Psoas muscle (tissue), 8 donors: ENCODE measurements at regions of chr3 and their contacts with region 1.

Region 1: DNA sequence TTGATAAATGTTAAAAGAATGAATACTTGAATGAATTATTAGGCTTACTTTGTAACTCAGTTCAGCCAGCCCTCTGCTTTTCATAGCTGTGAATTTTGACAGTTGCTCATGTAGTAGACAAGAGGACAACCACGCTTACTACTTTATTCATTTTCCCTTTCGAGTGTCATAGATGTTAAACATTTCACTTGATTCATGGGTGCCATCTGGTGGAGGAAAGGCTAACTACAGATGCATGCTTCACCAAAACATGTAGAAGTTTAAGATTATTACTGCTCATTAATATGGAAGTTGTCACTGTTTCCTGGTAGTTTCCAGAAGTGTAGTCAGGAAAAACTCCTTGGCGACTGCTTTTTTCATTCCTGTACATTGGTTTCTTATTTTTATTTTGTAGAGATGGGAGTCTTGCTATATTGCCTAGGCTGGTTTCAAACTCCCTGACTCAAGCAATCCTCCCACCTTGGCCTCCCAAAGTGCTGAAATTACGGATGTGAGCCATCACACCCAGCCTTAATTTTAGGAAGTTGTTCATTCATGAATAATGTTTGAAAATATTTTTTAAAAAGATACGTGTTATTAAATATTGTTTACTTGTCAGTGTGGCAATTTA is 163.2 kb downstream of the B3GALNT1 start:
- DNase-seq: peak in 1 of 2 donors; percentile 16
- ATAC-seq: peak; percentile 81 to 92 (median 87)
- H3K4me3 ChIP-seq: no peak overlapping the region
- H3K27ac ChIP-seq: no peak overlapping the region
- H3K4me1 ChIP-seq: peaks cover 5% of the 10 kb centered on the region
- H3K27me3 ChIP-seq: no peaks in the 10 kb centered on the region
- CTCF ChIP-seq: peak; percentile 93

Region 2: DNA sequence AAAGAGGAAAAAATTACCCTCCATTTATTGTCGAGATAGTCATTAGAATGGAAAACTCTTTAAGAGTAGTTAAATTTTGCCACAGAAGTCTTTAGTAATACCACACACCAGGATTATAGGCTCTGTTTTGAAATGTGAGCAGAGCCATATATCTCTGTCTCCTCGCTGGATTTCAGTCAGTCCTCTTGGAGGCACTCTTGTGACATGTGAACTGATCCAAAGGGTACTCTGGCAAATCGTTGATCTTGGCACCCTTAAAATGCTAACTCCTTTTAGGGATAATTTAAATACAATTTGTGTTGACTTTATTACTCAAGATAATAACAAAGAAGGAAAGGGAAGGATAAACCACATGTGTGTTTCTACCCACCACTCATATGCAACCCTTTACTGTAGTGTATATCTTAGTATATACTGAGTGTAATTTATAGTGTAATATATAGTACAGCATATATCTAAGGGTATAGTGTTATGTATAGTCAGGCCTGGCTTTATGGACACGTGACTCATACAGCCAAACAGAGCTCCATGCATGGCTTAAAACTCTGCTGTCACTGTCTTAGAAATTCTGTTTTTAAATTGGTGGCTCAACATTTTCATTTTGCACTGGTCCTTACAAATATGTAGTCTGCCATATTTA is 364.3 kb before region 1 on chr3:
- intact Hi-C with region 1: loop called in 1 of 2 experiments (anchors 10 kb)
- DNase-seq: no peak
- ATAC-seq: peak; percentile 90 to 96 (median 94)
- H3K4me3 ChIP-seq: peak overlapping the region; percentile 11
- H3K27ac ChIP-seq: peak overlapping the region; percentile 70
- H3K4me1 ChIP-seq: peaks cover 11% of the 10 kb centered on the region
- H3K27me3 ChIP-seq: no peaks in the 10 kb centered on the region
- CTCF ChIP-seq: no peak

Region 3: GRCh38 chr3:160707187-160707794 is 234.7 kb before region 1 on chr3:
- intact Hi-C with region 1: loop called (anchors 2 kb)
- DNase-seq: no peak
- ATAC-seq: peak; percentile 76 to 98 (median 84)
- H3K4me3 ChIP-seq: no peak overlapping the region
- H3K27ac ChIP-seq: no peak overlapping the region
- H3K4me1 ChIP-seq: no peaks in the 10 kb centered on the region
- H3K27me3 ChIP-seq: no peaks in the 10 kb centered on the region
- CTCF ChIP-seq: peak; percentile 75

Region 4: GRCh38 chr3:160841455-160841854 is 100.5 kb before region 1 on chr3:
- intact Hi-C with region 1: loop called in 1 of 2 experiments (anchors 5 kb)
- DNase-seq: no peak
- ATAC-seq: peak in 3 of 4 donors; percentile 47 to 61 (median 53)
- H3K4me3 ChIP-seq: no peak overlapping the region
- H3K27ac ChIP-seq: peak overlapping the region; percentile 71
- H3K4me1 ChIP-seq: peaks cover 35% of the 10 kb centered on the region
- H3K27me3 ChIP-seq: no peaks in the 10 kb centered on the region
- CTCF ChIP-seq: peak; percentile 18

Region 5: DNA sequence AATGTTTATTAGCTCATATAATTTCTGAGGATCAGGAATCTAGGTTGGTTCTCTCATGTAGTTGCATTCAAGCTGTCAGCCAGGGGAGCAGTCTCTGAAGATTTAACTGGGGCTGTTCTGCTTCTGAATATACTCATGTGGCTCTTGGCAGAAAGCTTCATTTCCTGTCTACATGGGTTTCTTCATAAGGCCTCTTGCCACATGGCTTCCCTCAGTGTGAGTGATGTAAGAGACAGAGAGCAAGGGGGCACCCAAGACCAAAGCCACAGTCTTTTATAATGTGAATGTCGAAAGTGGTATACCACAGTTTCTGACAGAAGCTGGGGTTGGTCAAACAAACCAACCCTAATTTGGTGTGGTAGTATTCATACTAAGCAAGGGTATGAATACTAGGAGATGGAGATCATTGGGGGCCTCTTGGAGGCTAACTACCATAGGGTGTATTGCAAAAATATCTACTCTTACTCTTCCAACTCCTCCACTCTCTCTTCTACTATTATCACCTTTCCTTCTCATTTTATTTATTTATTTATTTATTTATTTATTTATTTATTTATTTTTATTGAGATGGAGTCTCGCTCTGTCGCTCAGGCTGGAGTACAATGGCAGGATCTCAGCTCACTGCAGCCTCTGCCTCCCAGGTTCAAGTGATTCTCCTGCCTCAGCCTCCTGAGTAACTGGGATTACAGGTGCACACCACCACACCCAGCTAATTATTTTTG is 39.4 kb after region 1 on chr3:
- intact Hi-C with region 1: no loop called
- DNase-seq: no peak
- ATAC-seq: peak in 3 of 4 donors; percentile 63 to 66 (median 63)
- H3K4me3 ChIP-seq: no peak overlapping the region
- H3K27ac ChIP-seq: no peak overlapping the region
- H3K4me1 ChIP-seq: no peaks in the 10 kb centered on the region
- H3K27me3 ChIP-seq: no peaks in the 10 kb centered on the region
- CTCF ChIP-seq: no peak